CD4-positive, alpha-beta T cell (primary cell): ENCODE measurements at regions of chr9 and their contacts with region 1.

Region 1: DNA sequence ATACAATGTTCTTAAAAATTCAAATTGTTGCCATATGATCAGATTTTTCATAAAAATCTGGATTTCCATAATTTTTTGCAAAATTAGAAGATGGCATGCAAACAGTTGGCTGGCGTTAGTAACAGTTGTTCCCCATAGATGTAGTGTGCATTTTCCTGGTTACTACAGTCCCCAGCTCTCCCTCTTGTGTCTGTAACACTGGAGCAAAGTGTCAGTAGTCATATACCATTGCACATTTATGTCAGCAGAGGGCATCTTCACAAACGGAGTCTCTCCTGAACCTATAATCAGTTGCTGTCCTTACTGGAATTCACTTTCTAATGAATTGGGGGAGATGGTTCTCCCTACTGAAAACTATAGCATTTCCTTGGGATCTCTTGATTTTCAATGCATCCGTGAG is 44.7 kb upstream of the DMAC1 start:
- DNase-seq: peak in 4 of 14 experiments; percentile 4 to 56 (median 48)
- ATAC-seq: peak; percentile 60
- H3K4me3 ChIP-seq: no peak overlapping the region
- H3K4me3 Mint-ChIP-seq: no peak overlapping the region
- H3K27ac ChIP-seq: no peak overlapping the region
- H3K27ac Mint-ChIP-seq: no peak overlapping the region
- H3K4me1 ChIP-seq: no peaks in the 10 kb centered on the region
- H3K4me1 Mint-ChIP-seq: peaks cover 5% of the 10 kb centered on the region
- H3K27me3 ChIP-seq: no peaks in the 10 kb centered on the region
- H3K27me3 Mint-ChIP-seq: no peaks in the 10 kb centered on the region
- CTCF ChIP-seq: peak; percentile 47

Region 2: GRCh38 chr9:7976167-7976755 is 132.0 kb after region 1 on chr9:
- CTCF ChIA-PET with region 1: no interaction called
- POLR2A ChIA-PET with region 1: no interaction called
- intact Hi-C with region 1: loop called in 1 of 2 experiments (anchors 1 kb)
- DNase-seq: peak in 12 of 14 experiments; percentile 4 to 94 (median 42)
- ATAC-seq: peak; percentile 97
- H3K4me3 ChIP-seq: peak overlapping the region; percentile 4
- H3K4me3 Mint-ChIP-seq: peak overlapping the region; percentile 32
- H3K27ac ChIP-seq: peak overlapping the region; percentile 3 to 56
- H3K27ac Mint-ChIP-seq: peak overlapping the region; percentile 82
- H3K4me1 ChIP-seq: peaks cover 42% of the 10 kb centered on the region
- H3K4me1 Mint-ChIP-seq: peaks cover 73% of the 10 kb centered on the region
- H3K27me3 ChIP-seq: no peaks in the 10 kb centered on the region
- H3K27me3 Mint-ChIP-seq: no peaks in the 10 kb centered on the region
- CTCF ChIP-seq: no peak

Region 3: DNA sequence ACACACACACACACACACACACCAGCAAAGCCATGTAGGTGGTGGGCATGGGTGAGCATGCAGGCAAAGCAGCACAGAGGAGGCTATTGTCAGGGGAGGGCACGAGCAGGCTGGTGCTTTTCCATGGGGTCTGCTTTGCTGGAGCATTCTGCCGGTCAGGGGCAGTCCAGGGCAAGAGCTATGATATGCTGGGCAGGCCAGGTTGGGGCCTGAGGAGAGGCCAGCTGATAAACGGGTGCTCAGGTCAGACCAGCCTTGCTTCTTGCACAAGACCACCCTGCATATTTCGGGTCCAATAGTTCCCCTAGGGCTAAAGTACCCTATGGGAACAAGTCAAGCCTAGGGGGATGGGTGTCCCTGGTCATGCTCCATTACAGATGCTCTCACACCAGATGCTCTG is 209.3 kb after region 1 on chr9:
- CTCF ChIA-PET with region 1: no interaction called
- POLR2A ChIA-PET with region 1: no interaction called
- intact Hi-C with region 1: loop called in 1 of 2 experiments (anchors 10 kb)
- DNase-seq: peak in 1 of 14 experiments; percentile 8
- ATAC-seq: no peak
- H3K4me3 ChIP-seq: no peak overlapping the region
- H3K4me3 Mint-ChIP-seq: no peak overlapping the region
- H3K27ac ChIP-seq: no peak overlapping the region
- H3K27ac Mint-ChIP-seq: no peak overlapping the region
- H3K4me1 ChIP-seq: no peaks in the 10 kb centered on the region
- H3K4me1 Mint-ChIP-seq: no peaks in the 10 kb centered on the region
- H3K27me3 ChIP-seq: no peaks in the 10 kb centered on the region
- H3K27me3 Mint-ChIP-seq: no peaks in the 10 kb centered on the region
- CTCF ChIP-seq: no peak

Region 4: GRCh38 chr9:8179381-8180053 is 335.3 kb after region 1 on chr9:
- CTCF ChIA-PET with region 1: no interaction called
- POLR2A ChIA-PET with region 1: no interaction called
- intact Hi-C with region 1: loop called in 1 of 2 experiments (anchors 1 kb)
- DNase-seq: no peak
- ATAC-seq: no peak
- H3K4me3 ChIP-seq: no peak overlapping the region
- H3K4me3 Mint-ChIP-seq: no peak overlapping the region
- H3K27ac ChIP-seq: no peak overlapping the region
- H3K27ac Mint-ChIP-seq: no peak overlapping the region
- H3K4me1 ChIP-seq: no peaks in the 10 kb centered on the region
- H3K4me1 Mint-ChIP-seq: no peaks in the 10 kb centered on the region
- H3K27me3 ChIP-seq: peaks cover 0 to 3% of the 10 kb centered on the region in 2 experiments
- H3K27me3 Mint-ChIP-seq: no peaks in the 10 kb centered on the region
- CTCF ChIP-seq: no peak